Activated CD8-positive, alpha-beta T cell treated with anti-CD3 and anti-CD28 coated beads for 36 hours (primary cell): ENCODE measurements at regions of chr7 and their contacts with region 1.

Region 1: GRCh38 chr7:22860784-22861482 is 38.3 kb upstream of the TOMM7 start:
- DNase-seq: peak; percentile 48
- ATAC-seq: peak; percentile 67
- H3K4me3 Mint-ChIP-seq: no peak overlapping the region
- H3K27ac Mint-ChIP-seq: no peak overlapping the region
- H3K4me1 Mint-ChIP-seq: peaks cover 58% of the 10 kb centered on the region
- H3K27me3 Mint-ChIP-seq: no peaks in the 10 kb centered on the region
- CTCF ChIP-seq: peak; percentile 77

Region 2: DNA sequence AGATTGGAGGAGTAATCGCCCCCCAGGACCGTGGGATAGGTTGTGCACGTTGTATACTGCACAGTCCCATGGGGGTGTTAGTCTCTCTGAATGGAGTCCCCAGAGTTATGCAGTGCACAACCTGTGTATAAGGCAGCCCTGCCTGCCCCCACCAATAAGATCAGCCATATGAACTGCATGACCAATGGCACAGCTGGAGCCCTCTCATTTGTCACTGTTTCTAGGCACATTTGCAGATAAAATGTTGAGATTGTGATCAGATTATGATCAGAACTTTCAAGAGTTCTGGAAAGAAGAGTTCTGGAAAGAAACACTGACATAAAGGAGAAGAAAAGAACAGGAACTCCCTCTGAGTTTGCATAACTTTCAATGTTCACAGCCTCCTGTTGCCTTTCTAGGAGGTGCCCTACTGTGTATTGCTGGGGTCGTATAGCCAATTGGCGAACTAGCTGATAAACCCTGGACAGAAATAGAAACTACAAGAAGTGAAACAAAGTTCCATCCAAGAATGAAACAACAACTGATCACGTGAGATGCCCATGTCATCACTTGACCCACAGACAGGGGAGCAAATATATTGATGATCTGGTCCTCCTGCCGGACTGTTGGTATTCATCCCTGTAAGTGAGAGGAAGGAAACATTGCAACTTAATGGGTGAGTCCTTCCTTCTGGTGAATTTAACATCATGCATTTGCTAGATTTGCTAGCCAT is 11.3 kb after region 1 on chr7:
- CTCF ChIA-PET with region 1: interaction called, 13 read pairs
- POLR2A ChIA-PET with region 1: interaction called, 8 read pairs
- intact Hi-C with region 1: no loop called
- DNase-seq: no peak
- ATAC-seq: peak; percentile 61
- H3K4me3 Mint-ChIP-seq: no peak overlapping the region
- H3K27ac Mint-ChIP-seq: no peak overlapping the region
- H3K4me1 Mint-ChIP-seq: peaks cover 5% of the 10 kb centered on the region
- H3K27me3 Mint-ChIP-seq: no peaks in the 10 kb centered on the region
- CTCF ChIP-seq: no peak